ENCODE measurements at regions of chr3 and their contacts with region 1.

Region 1: GRCh38 chr3:116770815-116771450 is 61.4 kb downstream of the TUSC7 start:
- DNase-seq: peak; percentile 37
- ATAC-seq: peak; percentile 98
- H3K4me3 ChIP-seq: no peak overlapping the region
- H3K27ac ChIP-seq: no peak overlapping the region
- H3K4me1 ChIP-seq: no peaks in the 10 kb centered on the region
- H3K27me3 ChIP-seq: no peaks in the 10 kb centered on the region
- CTCF ChIP-seq: peak; percentile 89 to 99 (median 99)
- EP300 ChIP-seq: no peak
- POLR2A ChIP-seq: no peak
- RAD21 ChIP-seq: peak; percentile 99

Region 2: GRCh38 chr3:116188231-116188785 is 582.6 kb before region 1 on chr3:
- CTCF ChIA-PET with region 1: no interaction called
- POLR2A ChIA-PET with region 1: no interaction called
- RAD21 ChIA-PET with region 1: no interaction called
- SMC1A ChIA-PET with region 1: no interaction called
- in situ Hi-C with region 1: no loop called
- intact Hi-C with region 1: no loop called
- DNase-seq: no peak
- ATAC-seq: no peak
- H3K4me3 ChIP-seq: no peak overlapping the region
- H3K27ac ChIP-seq: no peak overlapping the region
- H3K4me1 ChIP-seq: no peaks in the 10 kb centered on the region
- H3K27me3 ChIP-seq: no peaks in the 10 kb centered on the region
- CTCF ChIP-seq: no peak
- EP300 ChIP-seq: no peak
- POLR2A ChIP-seq: no peak
- RAD21 ChIP-seq: no peak

Region 3: GRCh38 chr3:116785226-116785625 is 14.3 kb after region 1 on chr3:
- CTCF ChIA-PET with region 1: interaction called, 21 read pairs
- POLR2A ChIA-PET with region 1: no interaction called
- RAD21 ChIA-PET with region 1: no interaction called
- SMC1A ChIA-PET with region 1: interaction called, 5 read pairs
- in situ Hi-C with region 1: no loop called
- intact Hi-C with region 1: no loop called
- DNase-seq: no peak
- ATAC-seq: no peak
- H3K4me3 ChIP-seq: no peak overlapping the region
- H3K27ac ChIP-seq: no peak overlapping the region
- H3K4me1 ChIP-seq: no peaks in the 10 kb centered on the region
- H3K27me3 ChIP-seq: no peaks in the 10 kb centered on the region
- CTCF ChIP-seq: no peak
- EP300 ChIP-seq: no peak
- POLR2A ChIP-seq: no peak
- RAD21 ChIP-seq: no peak

Region 4: DNA sequence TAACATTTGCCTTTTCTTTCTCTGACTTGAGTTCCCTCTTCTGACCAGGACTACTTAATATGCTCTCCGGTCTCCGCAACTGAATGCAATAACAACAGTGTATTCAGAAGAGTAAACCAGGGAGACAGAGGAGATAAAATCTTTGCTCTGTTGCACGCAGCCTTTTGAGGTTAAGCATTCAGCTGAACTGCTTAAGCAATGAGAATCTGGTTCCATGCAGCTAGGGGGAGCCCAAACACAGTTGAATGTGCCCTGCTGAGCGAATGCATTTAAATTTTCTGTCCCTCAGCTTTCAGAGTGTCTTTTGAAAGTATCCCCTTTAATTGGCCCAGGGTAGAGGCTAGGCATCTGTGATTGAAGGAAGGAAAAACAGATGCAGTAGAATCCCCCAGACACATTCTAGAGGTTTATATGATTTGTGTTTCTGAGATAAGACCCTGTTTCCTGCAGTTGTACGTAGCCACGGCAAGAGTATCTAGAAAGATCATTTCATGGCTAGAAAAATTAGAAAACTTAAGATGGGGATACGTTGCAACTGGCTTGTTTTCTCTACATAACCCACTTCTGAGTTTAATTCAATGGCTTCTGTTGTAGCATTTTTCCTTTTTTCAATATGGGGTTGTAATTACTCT is 248.3 kb after region 1 on chr3:
- CTCF ChIA-PET with region 1: interaction called, 7 read pairs
- POLR2A ChIA-PET with region 1: no interaction called
- RAD21 ChIA-PET with region 1: interaction called, 4 read pairs
- SMC1A ChIA-PET with region 1: interaction called, 7 read pairs
- in situ Hi-C with region 1: no loop called
- intact Hi-C with region 1: loop called (anchors 5 kb)
- DNase-seq: no peak
- ATAC-seq: peak; percentile 94
- H3K4me3 ChIP-seq: no peak overlapping the region
- H3K27ac ChIP-seq: no peak overlapping the region
- H3K4me1 ChIP-seq: peaks cover 7% of the 10 kb centered on the region
- H3K27me3 ChIP-seq: no peaks in the 10 kb centered on the region
- CTCF ChIP-seq: peak; percentile 77 to 81 (median 79)
- EP300 ChIP-seq: no peak
- POLR2A ChIP-seq: no peak
- RAD21 ChIP-seq: peak; percentile 82

Region 5: GRCh38 chr3:117355566-117355965 is 584.6 kb after region 1 on chr3:
- CTCF ChIA-PET with region 1: interaction called, 4 read pairs
- POLR2A ChIA-PET with region 1: no interaction called
- RAD21 ChIA-PET with region 1: interaction called, 5 read pairs
- SMC1A ChIA-PET with region 1: no interaction called
- in situ Hi-C with region 1: loop called (anchors 10 kb)
- intact Hi-C with region 1: loop called (anchors 2 kb)
- DNase-seq: no peak
- ATAC-seq: peak; percentile 90
- H3K4me3 ChIP-seq: no peak overlapping the region
- H3K27ac ChIP-seq: no peak overlapping the region
- H3K4me1 ChIP-seq: no peaks in the 10 kb centered on the region
- H3K27me3 ChIP-seq: no peaks in the 10 kb centered on the region; a peak in 1 of 4 replicates
- CTCF ChIP-seq: peak; percentile 27 to 60 (median 51); a peak in 3 of 6 replicates
- EP300 ChIP-seq: no peak
- POLR2A ChIP-seq: no peak
- RAD21 ChIP-seq: peak; percentile 49

Region 6: GRCh38 chr3:117997201-117998049 is 1226.5 kb after region 1 on chr3:
- CTCF ChIA-PET with region 1: interaction called, 4 read pairs
- POLR2A ChIA-PET with region 1: no interaction called
- RAD21 ChIA-PET with region 1: no interaction called
- SMC1A ChIA-PET with region 1: no interaction called
- in situ Hi-C with region 1: no loop called
- intact Hi-C with region 1: loop called (anchors 2 kb)
- DNase-seq: peak; percentile 3
- ATAC-seq: peak; percentile 100
- H3K4me3 ChIP-seq: no peak overlapping the region
- H3K27ac ChIP-seq: no peak overlapping the region
- H3K4me1 ChIP-seq: no peaks in the 10 kb centered on the region
- H3K27me3 ChIP-seq: no peaks in the 10 kb centered on the region; a peak in 1 of 4 replicates
- CTCF ChIP-seq: peak; percentile 78 to 93 (median 90)
- EP300 ChIP-seq: no peak
- POLR2A ChIP-seq: no peak
- RAD21 ChIP-seq: peak; percentile 50

Measured in GM12878 (cell line).